ENCODE measurements at regions of chr15 and their contacts with region 1.

Region 1: DNA sequence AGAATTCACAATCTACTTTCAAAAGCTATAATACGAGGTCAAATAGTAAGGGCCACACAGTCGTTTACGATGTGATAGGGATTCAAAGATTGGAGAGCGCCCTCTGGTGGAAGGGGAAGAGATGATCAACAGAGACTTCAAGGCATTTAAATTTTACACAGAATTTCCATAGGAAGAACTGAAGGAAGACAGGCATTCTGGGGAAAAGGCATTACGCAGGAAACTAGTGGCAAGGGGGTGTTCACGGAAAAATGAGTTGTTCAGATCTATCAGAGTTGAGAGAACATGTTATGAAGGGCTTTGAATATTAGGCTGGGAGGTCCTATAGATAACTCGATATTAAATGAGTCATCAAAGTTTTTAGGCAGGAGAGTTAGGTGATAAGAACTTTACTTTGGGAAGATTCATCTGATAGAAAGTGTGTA is 128.7 kb downstream of the FRMD5 start:
- DNase-seq: peak; percentile 24 to 75
- ATAC-seq: peak; percentile 76 to 80; a peak in 5 of 6 replicates
- H3K4me3 ChIP-seq: no peak overlapping the region
- H3K27ac ChIP-seq: peak overlapping the region; percentile 37 to 72; a peak in 4 of 6 replicates
- H3K4me1 ChIP-seq: no peaks in the 10 kb centered on the region
- CTCF ChIP-seq: peak; percentile 80
- EP300 ChIP-seq: no peak
- POLR2A ChIP-seq: no peak
- RAD21 ChIP-seq: peak; percentile 76

Region 2: DNA sequence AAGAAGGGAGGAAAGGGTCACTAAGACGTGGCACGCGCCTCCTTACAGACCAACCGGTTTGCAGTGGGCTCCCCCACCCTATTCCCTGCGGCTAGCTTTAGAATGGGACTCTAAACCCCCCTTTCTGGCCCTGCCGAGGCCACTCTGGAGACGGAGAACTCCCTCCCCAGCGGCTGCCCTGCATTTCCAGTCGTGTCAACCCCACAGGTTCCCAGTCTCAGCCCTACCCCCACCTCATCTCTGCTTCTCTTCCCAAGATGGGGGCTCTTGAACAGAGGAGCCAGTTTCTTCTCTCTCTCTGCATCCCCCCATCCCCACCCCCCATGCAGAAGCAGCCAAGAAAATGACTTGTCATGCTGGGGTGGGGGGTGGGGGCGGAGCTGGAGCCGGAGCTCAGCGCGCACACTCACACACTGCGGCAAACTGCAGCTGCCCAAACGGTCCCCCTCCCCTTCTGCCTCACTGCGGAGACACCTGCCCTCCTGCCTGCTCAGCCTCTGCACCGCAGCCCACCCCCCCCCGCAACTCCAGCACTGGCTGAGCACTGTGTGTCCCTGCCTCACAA is 548.0 kb before region 1 on chr15:
- CTCF ChIA-PET with region 1: no interaction called
- POLR2A ChIA-PET with region 1: no interaction called
- DNase-seq: no peak
- ATAC-seq: no peak; a peak in 1 of 6 replicates
- H3K4me3 ChIP-seq: no peak overlapping the region
- H3K27ac ChIP-seq: no peak overlapping the region
- H3K4me1 ChIP-seq: no peaks in the 10 kb centered on the region
- CTCF ChIP-seq: no peak
- EP300 ChIP-seq: no peak
- POLR2A ChIP-seq: no peak
- RAD21 ChIP-seq: no peak

Region 3: DNA sequence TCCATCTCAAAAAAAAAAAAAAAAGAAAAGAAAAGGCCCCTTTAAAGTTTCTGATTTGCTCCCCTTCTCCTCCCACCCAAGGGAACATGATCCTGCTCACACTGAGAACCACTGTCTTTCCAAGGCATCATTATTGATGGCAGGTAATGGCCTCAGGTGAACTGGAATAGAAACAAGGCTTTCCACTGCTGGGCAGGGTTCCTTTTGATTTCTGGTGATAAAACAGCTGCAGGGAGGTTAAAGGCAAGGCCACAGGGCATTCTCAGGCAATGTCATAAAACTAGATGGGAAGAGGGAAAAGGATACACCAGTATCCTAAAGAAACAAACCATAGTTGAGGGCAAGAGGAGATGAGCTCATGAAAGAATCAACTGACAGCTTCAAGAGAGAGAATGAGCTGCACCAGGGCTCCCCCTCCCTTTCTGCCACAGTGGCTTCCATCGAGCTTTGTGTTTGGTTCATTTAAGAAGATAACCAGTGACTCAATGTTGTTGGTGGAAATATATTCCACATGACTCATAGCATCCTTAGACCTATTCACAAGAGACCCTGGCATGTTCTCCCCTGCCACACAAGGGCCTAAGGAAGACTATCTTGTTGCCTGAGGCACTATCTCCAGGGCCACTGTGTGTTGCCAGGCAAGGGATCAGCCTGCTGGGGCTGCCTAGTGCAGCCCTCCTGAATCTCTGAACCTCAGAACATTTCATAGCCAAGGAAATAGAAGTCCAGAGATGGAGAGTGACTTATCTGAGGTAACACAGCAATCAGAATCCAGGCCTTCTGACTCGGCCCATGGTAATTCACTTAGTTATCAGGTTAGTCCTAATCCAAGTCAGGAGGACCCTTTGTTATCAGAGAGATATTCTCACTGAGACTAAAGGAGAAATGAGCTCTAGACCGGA is 153.1 kb before region 1 on chr15:
- CTCF ChIA-PET with region 1: interaction called, 10 read pairs
- POLR2A ChIA-PET with region 1: no interaction called
- DNase-seq: peak; percentile 43 to 65
- ATAC-seq: peak; percentile 82 to 86
- H3K4me3 ChIP-seq: no peak overlapping the region
- H3K27ac ChIP-seq: peak overlapping the region; percentile 33 to 61; a peak in 3 of 6 replicates
- H3K4me1 ChIP-seq: peaks cover 33% of the 10 kb centered on the region
- CTCF ChIP-seq: no peak
- EP300 ChIP-seq: no peak
- POLR2A ChIP-seq: no peak
- RAD21 ChIP-seq: no peak

Region 4: GRCh38 chr15:44009056-44009455 is 57.3 kb before region 1 on chr15:
- CTCF ChIA-PET with region 1: interaction called, 10 read pairs
- POLR2A ChIA-PET with region 1: no interaction called
- DNase-seq: peak; percentile 22 to 51
- ATAC-seq: peak; percentile 71 to 95; a peak in 5 of 6 replicates
- H3K4me3 ChIP-seq: no peak overlapping the region
- H3K27ac ChIP-seq: peak overlapping the region; percentile 45 to 73; a peak in 4 of 6 replicates
- H3K4me1 ChIP-seq: peaks cover 21% of the 10 kb centered on the region
- CTCF ChIP-seq: no peak
- EP300 ChIP-seq: no peak
- POLR2A ChIP-seq: no peak
- RAD21 ChIP-seq: no peak

Region 5: GRCh38 chr15:44023176-44023575 is 43.2 kb before region 1 on chr15:
- CTCF ChIA-PET with region 1: no interaction called
- POLR2A ChIA-PET with region 1: no interaction called
- DNase-seq: no peak
- ATAC-seq: no peak
- H3K4me3 ChIP-seq: no peak overlapping the region
- H3K27ac ChIP-seq: no peak overlapping the region
- H3K4me1 ChIP-seq: peaks cover 1% of the 10 kb centered on the region
- CTCF ChIP-seq: no peak
- EP300 ChIP-seq: no peak
- POLR2A ChIP-seq: no peak
- RAD21 ChIP-seq: no peak

Region 6: DNA sequence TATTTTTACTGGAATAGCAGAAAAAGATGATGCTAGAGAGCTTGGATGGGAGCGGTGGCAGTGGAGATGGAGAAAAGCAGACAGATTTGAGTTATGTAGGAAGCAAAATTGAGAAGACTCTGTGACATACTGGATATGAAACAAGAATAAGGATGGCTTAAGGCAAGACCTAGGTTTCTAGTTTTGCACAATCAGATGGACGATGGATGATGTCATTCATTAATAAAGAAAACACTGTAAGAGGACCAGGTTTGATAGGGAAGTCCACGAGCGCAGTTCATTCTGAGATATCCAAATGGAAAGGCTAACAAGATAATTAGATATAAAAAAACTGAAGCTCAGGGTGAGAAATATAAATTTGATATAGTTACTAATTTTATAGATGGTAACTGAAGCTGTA is 12.9 kb before region 1 on chr15:
- CTCF ChIA-PET with region 1: interaction called, 25 read pairs
- POLR2A ChIA-PET with region 1: no interaction called
- DNase-seq: no peak
- ATAC-seq: no peak
- H3K4me3 ChIP-seq: no peak overlapping the region
- H3K27ac ChIP-seq: no peak overlapping the region
- H3K4me1 ChIP-seq: no peaks in the 10 kb centered on the region
- CTCF ChIP-seq: no peak
- EP300 ChIP-seq: no peak
- POLR2A ChIP-seq: no peak
- RAD21 ChIP-seq: no peak

Region 7: DNA sequence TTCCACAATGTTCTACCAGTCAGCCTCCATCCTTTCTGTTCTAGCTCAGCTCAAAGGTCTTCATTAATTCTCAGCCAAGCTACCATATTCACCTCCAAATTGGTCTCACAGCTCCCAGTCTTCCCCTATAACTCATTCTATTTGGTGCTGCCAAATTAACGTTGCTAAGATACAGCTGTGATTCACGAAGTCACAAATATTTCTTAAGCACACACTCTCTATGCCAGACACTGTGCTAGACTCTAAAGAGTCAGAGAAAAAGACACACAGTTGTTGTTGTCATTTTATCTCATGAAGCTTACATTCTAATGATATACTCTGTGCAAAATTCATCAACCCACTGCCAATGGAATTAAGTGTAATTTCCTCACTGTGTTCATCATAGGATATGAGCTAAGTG is 25.9 kb after region 1 on chr15:
- CTCF ChIA-PET with region 1: interaction called, 12 read pairs
- POLR2A ChIA-PET with region 1: no interaction called
- DNase-seq: peak in 1 of 2 experiments; percentile 24
- ATAC-seq: peak; percentile 70 to 74; a peak in 4 of 6 replicates
- H3K4me3 ChIP-seq: no peak overlapping the region
- H3K27ac ChIP-seq: peak overlapping the region in 1 of 2 experiments; percentile 53; a peak in 3 of 6 replicates
- H3K4me1 ChIP-seq: peaks cover 53% of the 10 kb centered on the region
- CTCF ChIP-seq: no peak
- EP300 ChIP-seq: no peak
- POLR2A ChIP-seq: no peak
- RAD21 ChIP-seq: no peak